T-cell (primary cell): ENCODE measurements at regions of chr12 and their contacts with region 1.

Region 1: DNA sequence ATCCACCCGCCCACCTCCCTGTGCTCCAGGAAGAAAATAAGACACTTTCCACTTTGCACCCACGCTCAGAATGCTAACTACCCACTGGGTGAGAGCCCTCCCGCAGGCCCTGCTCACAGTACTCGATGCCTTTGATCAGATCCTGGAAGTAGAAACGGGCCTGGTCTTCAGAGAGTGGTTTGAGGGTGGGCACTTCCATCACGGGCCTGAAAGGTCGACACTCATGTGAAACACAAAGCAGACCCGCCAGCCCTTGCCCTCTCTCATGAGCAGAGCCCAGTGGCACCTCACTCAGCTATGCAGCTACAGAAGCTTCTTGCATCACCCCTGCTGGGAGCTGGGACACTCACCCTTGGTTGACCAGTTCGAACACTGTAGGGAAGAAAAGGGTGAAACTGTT is 41.1 kb downstream of the CAMKK2 start:
- DNase-seq: no peak
- ATAC-seq: no peak
- H3K4me3 ChIP-seq: no peak overlapping the region
- H3K4me3 Mint-ChIP-seq: no peak overlapping the region
- H3K27ac ChIP-seq: no peak overlapping the region
- H3K27ac Mint-ChIP-seq: no peak overlapping the region
- H3K4me1 ChIP-seq: no peaks in the 10 kb centered on the region
- H3K4me1 Mint-ChIP-seq: no peaks in the 10 kb centered on the region
- H3K27me3 ChIP-seq: no peaks in the 10 kb centered on the region
- H3K27me3 Mint-ChIP-seq: no peaks in the 10 kb centered on the region

Region 2: GRCh38 chr12:121154793-121155375 is 100.5 kb before region 1 on chr12:
- CTCF ChIA-PET with region 1: interaction called in 1 of 2 experiments, 11 read pairs
- POLR2A ChIA-PET with region 1: no interaction called
- DNase-seq: no peak
- ATAC-seq: no peak
- H3K4me3 ChIP-seq: no peak overlapping the region
- H3K4me3 Mint-ChIP-seq: no peak overlapping the region
- H3K27ac ChIP-seq: no peak overlapping the region
- H3K27ac Mint-ChIP-seq: no peak overlapping the region
- H3K4me1 ChIP-seq: no peaks in the 10 kb centered on the region
- H3K4me1 Mint-ChIP-seq: no peaks in the 10 kb centered on the region
- H3K27me3 ChIP-seq: no peaks in the 10 kb centered on the region
- H3K27me3 Mint-ChIP-seq: no peaks in the 10 kb centered on the region

Region 3: DNA sequence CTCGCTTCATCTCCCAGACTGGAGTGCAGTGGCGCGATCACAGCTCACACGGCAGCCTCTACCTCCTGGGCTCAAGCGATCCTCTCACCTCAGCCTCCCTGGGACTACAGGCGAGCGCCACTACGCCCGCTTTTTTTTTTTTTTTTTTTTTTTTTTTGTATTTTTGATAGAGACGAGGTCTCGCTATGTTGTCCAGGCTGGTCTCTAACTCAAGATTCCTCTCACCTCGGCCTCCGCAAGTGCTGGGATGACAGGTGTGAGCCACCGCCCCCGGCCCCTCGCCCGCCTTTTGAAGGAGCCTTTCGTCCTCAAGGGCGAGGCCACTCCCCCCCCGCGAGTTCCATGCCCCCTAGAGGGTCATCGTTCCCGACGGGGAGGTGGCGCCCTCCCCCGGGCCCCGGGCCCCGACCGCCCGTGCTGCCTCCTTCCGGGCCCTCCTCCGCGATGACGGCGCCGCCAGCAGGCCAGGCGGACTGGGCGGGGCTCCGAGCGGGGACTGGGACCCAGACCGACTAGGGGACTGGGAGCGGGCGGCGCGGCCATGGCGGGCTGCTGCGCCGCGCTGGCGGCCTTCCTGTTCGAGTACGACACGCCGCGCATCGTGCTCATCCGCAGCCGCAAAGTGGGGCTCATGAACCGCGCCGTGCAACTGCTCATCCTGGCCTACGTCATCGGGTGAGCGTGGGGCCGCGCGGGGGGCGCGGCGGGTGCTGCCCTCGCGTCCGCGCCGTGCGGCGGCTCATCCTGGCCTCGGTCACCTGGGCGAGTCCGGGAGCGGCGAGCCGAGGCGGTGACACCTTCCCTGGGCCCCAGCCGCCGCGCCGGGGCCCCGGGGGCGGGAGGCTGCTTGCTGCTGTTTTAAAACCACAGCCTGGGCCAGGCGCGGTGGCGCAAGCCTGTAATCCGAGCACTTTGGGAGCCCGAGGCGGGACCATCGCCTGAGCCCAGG is 45.5 kb before region 1 on chr12 and contains the start of gene P2RX4:
- CTCF ChIA-PET with region 1: no interaction called
- POLR2A ChIA-PET with region 1: no interaction called
- DNase-seq: peak; percentile 75 to 94 (median 87)
- ATAC-seq: peak; percentile 86 to 87 (median 86)
- H3K4me3 ChIP-seq: peak within 1 kb of the TSS; percentile 62 to 83
- H3K4me3 Mint-ChIP-seq: peak within 1 kb of the TSS; percentile 83 to 91 (median 89)
- H3K27ac ChIP-seq: peak within 1 kb of the TSS; percentile 90
- H3K27ac Mint-ChIP-seq: peak within 1 kb of the TSS; percentile 93 to 94
- H3K4me1 ChIP-seq: peaks cover 3 to 32% of the 10 kb centered on the region in 2 experiments
- H3K4me1 Mint-ChIP-seq: peaks cover 29 to 38% (median 37%) of the 10 kb centered on the region in 3 donors
- H3K27me3 ChIP-seq: no peaks in the 10 kb centered on the region
- H3K27me3 Mint-ChIP-seq: no peaks in the 10 kb centered on the region
- total RNA-seq, gene P2RX4: 36.2 to 62.3 (median 36.9) TPM